CD8-positive, alpha-beta T cell (primary cell): ENCODE measurements at regions of chr19 and their contacts with region 1.

Region 1: GRCh38 chr19:31214086-31214485 is 135.2 kb downstream of the TSHZ3 start:
- DNase-seq: peak; percentile 62 to 95 (median 85)
- ATAC-seq: peak; percentile 93
- H3K4me3 ChIP-seq: peak overlapping the region in 1 of 2 experiments; percentile 6
- H3K4me3 Mint-ChIP-seq: peak overlapping the region; percentile 60
- H3K27ac ChIP-seq: peak overlapping the region; percentile 41 to 62
- H3K27ac Mint-ChIP-seq: peak overlapping the region; percentile 92
- H3K4me1 ChIP-seq: peaks cover 18% of the 10 kb centered on the region
- H3K4me1 Mint-ChIP-seq: peaks cover 20% of the 10 kb centered on the region
- H3K27me3 ChIP-seq: no peaks in the 10 kb centered on the region
- H3K27me3 Mint-ChIP-seq: no peaks in the 10 kb centered on the region
- CTCF ChIP-seq: no peak

Region 2: GRCh38 chr19:29212648-29213573 is 2001.2 kb before region 1 on chr19 and contains the start of gene UQCRFS1:
- CTCF ChIA-PET with region 1: no interaction called
- POLR2A ChIA-PET with region 1: no interaction called
- intact Hi-C with region 1: loop called in 1 of 2 experiments (anchors 10 kb)
- DNase-seq: peak; percentile 92 to 97 (median 95)
- ATAC-seq: peak; percentile 97
- H3K4me3 ChIP-seq: peak within 1 kb of the TSS; percentile 60 to 77
- H3K4me3 Mint-ChIP-seq: peak within 1 kb of the TSS; percentile 95
- H3K27ac ChIP-seq: peak within 1 kb of the TSS; percentile 80 to 89
- H3K27ac Mint-ChIP-seq: peak within 1 kb of the TSS; percentile 96
- H3K4me1 ChIP-seq: peaks cover 17% of the 10 kb centered on the region
- H3K4me1 Mint-ChIP-seq: peaks cover 46% of the 10 kb centered on the region
- H3K27me3 ChIP-seq: no peaks in the 10 kb centered on the region
- H3K27me3 Mint-ChIP-seq: peaks cover 6% of the 10 kb centered on the region
- CTCF ChIP-seq: no peak
- total RNA-seq, gene UQCRFS1: 31.5 to 31.8 TPM

Region 3: DNA sequence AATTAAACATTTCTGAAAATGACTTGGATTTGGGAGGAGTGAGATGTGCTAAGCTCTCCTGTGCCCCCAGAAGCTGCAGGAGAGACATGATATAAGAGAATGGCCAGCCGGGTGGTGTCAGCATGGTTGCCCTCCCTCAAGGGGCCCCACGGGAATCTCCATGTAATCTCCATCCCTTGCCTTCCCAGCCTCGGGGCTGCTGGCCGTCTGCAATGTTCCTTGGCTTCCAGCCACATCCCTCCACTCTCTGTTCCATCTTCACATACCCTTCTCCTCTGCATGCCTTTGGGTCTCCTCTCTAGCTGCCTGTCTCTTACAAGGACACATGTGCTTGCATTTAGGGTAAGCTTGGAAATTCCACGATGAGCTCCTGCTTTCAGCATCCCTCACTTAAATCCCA is 36.8 kb before region 1 on chr19:
- CTCF ChIA-PET with region 1: no interaction called
- POLR2A ChIA-PET with region 1: no interaction called
- intact Hi-C with region 1: no loop called
- DNase-seq: no peak
- ATAC-seq: no peak
- H3K4me3 ChIP-seq: no peak overlapping the region
- H3K4me3 Mint-ChIP-seq: no peak overlapping the region
- H3K27ac ChIP-seq: no peak overlapping the region
- H3K27ac Mint-ChIP-seq: no peak overlapping the region
- H3K4me1 ChIP-seq: no peaks in the 10 kb centered on the region
- H3K4me1 Mint-ChIP-seq: no peaks in the 10 kb centered on the region
- H3K27me3 ChIP-seq: no peaks in the 10 kb centered on the region
- H3K27me3 Mint-ChIP-seq: peaks cover 9% of the 10 kb centered on the region
- CTCF ChIP-seq: no peak

Region 4: GRCh38 chr19:31340042-31341025 is 126.2 kb after region 1 on chr19:
- CTCF ChIA-PET with region 1: no interaction called
- POLR2A ChIA-PET with region 1: no interaction called
- intact Hi-C with region 1: loop called (anchors 2 to 5 kb)
- DNase-seq: peak in 3 of 9 experiments; percentile 22 to 85 (median 76)
- ATAC-seq: peak; percentile 63
- H3K4me3 ChIP-seq: peak overlapping the region in 1 of 2 experiments; percentile 19
- H3K4me3 Mint-ChIP-seq: peak overlapping the region; percentile 52
- H3K27ac ChIP-seq: no peak overlapping the region
- H3K27ac Mint-ChIP-seq: no peak overlapping the region
- H3K4me1 ChIP-seq: peaks cover 24% of the 10 kb centered on the region
- H3K4me1 Mint-ChIP-seq: peaks cover 29% of the 10 kb centered on the region
- H3K27me3 ChIP-seq: peaks cover 2 to 3% of the 10 kb centered on the region in 2 experiments
- H3K27me3 Mint-ChIP-seq: peaks cover 32% of the 10 kb centered on the region
- CTCF ChIP-seq: no peak